ENCODE measurements at regions of chr2 and their contacts with region 1.

Region 1: DNA sequence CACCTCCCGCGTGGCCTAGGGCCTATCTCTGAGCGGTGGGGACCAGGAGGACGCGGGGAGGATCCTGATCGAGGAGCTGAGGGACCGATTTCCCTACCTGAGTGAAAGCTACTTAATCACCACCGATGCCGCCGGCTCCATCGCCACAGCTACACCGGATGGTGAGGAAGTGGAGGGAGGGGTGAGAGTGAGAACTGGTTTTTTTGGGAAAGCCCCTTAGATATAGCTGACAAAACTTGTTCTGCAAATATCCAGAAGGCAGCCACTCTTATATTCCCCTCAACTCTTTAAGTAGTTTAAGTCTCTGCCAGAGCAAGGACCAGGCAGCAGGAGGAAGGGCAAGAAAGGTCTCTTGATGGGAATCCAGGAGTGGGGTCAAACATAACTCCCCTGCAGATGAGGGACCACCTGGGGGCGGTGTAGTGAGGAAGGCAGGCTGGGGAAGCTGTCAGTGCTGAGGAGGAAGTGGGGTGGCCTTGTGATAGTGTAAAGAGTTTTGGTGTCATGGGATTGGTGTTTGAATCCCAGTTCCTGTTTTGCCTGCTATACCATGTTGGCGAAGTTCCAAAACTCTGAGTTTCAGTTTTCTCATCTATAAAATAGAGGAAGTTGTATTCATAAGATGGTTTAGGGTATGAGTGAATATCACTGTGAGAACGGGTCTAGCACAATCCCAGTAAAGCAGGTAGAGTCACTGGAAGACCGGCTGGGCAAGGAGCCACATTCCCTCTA is 3.4 kb downstream of the NAGK start:
- DNase-seq: no peak
- H3K4me3 ChIP-seq: no peak overlapping the region
- H3K27ac ChIP-seq: peak overlapping the region in 1 of 4 donors; percentile 31
- H3K4me1 ChIP-seq: peaks cover 32 to 46% (median 40%) of the 10 kb centered on the region in 4 donors
- H3K27me3 ChIP-seq: no peaks in the 10 kb centered on the region
- CTCF ChIP-seq: no peak
- EP300 ChIP-seq: no peak
- POLR2A ChIP-seq: no peak

Region 2: GRCh38 chr2:71130113-71130904 is 58.5 kb after region 1 on chr2 and contains the starts of genes MCEE and MPHOSPH10:
- intact Hi-C with region 1: loop called (anchors 5 kb)
- DNase-seq: peak; percentile 97
- H3K4me3 ChIP-seq: peak within 1 kb of the TSS; percentile 61 to 98 (median 86)
- H3K27ac ChIP-seq: peak within 1 kb of the TSS; percentile 89 to 95 (median 90)
- H3K4me1 ChIP-seq: peaks cover 26 to 57% (median 41%) of the 10 kb centered on the region in 4 donors
- H3K27me3 ChIP-seq: no peaks in the 10 kb centered on the region
- CTCF ChIP-seq: peak in 1 of 3 experiments; percentile 8
- EP300 ChIP-seq: no peak
- POLR2A ChIP-seq: no peak
- total RNA-seq, gene MCEE: 9.0 to 23.3 (median 12.4) TPM
- total RNA-seq, gene MPHOSPH10: 14.4 to 24.5 (median 17.9) TPM